ENCODE measurements at regions of chr1 and their contacts with region 1.

Region 1: GRCh38 chr1:66446261-66447001 is 87.5 kb upstream of the SGIP1 start:
- DNase-seq: peak in 6 of 9 experiments; percentile 14 to 86 (median 31)
- ATAC-seq: peak; percentile 74
- H3K4me3 ChIP-seq: peak overlapping the region in 1 of 2 experiments; percentile 12
- H3K4me3 Mint-ChIP-seq: peak overlapping the region; percentile 66
- H3K27ac ChIP-seq: peak overlapping the region; percentile 47 to 73
- H3K27ac Mint-ChIP-seq: peak overlapping the region; percentile 95
- H3K4me1 ChIP-seq: peaks cover 20% of the 10 kb centered on the region
- H3K4me1 Mint-ChIP-seq: peaks cover 23% of the 10 kb centered on the region
- H3K27me3 ChIP-seq: no peaks in the 10 kb centered on the region
- H3K27me3 Mint-ChIP-seq: no peaks in the 10 kb centered on the region
- CTCF ChIP-seq: peak; percentile 90

Region 2: DNA sequence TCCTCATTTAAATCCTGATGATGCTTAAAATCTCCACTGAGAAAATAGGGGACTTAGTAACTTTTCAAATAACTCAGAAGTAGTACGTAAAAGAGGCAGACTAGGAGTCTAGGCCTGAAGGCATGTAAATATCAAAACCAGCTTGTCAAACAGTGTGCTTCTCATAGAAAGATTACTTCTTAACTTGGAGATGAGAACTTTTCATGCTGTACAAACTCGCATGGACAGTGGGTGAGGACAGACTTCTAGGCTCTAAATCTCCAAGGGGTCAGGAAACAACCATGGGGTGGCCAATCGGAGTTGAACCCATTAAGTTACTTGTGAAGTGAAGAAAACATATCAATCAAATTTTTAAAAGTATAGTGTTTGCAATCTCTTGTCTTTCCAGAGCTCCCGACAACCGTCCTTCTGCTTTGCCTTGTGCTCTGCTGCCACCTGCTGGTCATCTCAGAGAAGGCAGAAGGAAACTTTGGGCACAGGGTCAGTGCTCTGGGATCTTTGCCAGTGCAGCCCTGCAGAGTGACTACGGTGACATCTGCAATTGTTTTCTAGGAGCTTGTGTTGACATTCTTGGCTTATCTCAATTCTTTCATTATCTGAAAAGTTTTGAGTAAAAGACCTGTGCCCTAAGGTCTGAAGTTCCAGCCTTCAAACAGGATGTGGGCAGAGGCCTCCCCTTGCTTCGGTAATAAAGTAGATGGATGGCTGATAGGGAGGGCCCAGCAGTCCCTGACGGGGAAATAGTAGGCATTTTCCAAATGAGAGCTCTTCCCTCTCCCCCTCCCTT is 758.8 kb before region 1 on chr1:
- CTCF ChIA-PET with region 1: no interaction called
- POLR2A ChIA-PET with region 1: no interaction called
- intact Hi-C with region 1: loop called in 1 of 2 experiments (anchors 5 kb)
- DNase-seq: peak; percentile 51 to 87 (median 75)
- ATAC-seq: peak; percentile 74
- H3K4me3 ChIP-seq: no peak overlapping the region
- H3K4me3 Mint-ChIP-seq: no peak overlapping the region
- H3K27ac ChIP-seq: no peak overlapping the region
- H3K27ac Mint-ChIP-seq: no peak overlapping the region
- H3K4me1 ChIP-seq: peaks cover 8% of the 10 kb centered on the region
- H3K4me1 Mint-ChIP-seq: peaks cover 4% of the 10 kb centered on the region
- H3K27me3 ChIP-seq: no peaks in the 10 kb centered on the region
- H3K27me3 Mint-ChIP-seq: peaks cover 19% of the 10 kb centered on the region
- CTCF ChIP-seq: peak; percentile 99

Region 3: DNA sequence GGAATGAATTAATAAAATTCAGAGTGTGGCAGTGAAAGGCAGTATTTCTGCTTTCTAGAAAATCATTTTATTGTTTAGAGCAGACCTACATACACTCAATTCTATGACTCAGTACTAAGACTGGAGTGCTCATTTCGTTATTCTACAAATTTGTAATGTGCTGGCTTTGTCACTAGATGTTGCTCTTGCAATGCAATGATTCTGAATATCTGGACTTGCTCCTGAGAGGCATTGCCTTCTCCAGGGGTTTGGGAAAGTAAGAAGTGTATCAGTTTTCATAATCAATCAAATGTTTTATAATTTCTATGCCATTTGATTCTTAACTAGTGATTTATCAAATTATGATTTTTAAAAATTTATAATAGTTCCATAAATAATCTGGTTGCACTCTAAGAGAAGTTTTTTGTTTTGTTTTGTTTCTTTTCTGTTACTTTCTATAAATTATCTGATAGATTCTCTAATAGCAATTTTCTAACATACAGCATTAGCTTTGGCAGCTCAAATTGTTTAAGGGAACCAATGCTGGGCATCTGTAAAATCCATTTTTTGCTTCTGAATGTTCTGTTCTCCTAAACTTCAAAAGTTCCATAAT is 193.0 kb before region 1 on chr1:
- CTCF ChIA-PET with region 1: interaction called, 677 read pairs
- POLR2A ChIA-PET with region 1: interaction called, 18 read pairs
- intact Hi-C with region 1: loop called (anchors 1 kb)
- DNase-seq: peak in 3 of 9 experiments; percentile 19 to 74 (median 61)
- ATAC-seq: peak; percentile 86
- H3K4me3 ChIP-seq: no peak overlapping the region
- H3K4me3 Mint-ChIP-seq: no peak overlapping the region
- H3K27ac ChIP-seq: no peak overlapping the region
- H3K27ac Mint-ChIP-seq: no peak overlapping the region
- H3K4me1 ChIP-seq: peaks cover 5% of the 10 kb centered on the region
- H3K4me1 Mint-ChIP-seq: peaks cover 13% of the 10 kb centered on the region
- H3K27me3 ChIP-seq: no peaks in the 10 kb centered on the region
- H3K27me3 Mint-ChIP-seq: no peaks in the 10 kb centered on the region
- CTCF ChIP-seq: peak; percentile 84

Region 4: DNA sequence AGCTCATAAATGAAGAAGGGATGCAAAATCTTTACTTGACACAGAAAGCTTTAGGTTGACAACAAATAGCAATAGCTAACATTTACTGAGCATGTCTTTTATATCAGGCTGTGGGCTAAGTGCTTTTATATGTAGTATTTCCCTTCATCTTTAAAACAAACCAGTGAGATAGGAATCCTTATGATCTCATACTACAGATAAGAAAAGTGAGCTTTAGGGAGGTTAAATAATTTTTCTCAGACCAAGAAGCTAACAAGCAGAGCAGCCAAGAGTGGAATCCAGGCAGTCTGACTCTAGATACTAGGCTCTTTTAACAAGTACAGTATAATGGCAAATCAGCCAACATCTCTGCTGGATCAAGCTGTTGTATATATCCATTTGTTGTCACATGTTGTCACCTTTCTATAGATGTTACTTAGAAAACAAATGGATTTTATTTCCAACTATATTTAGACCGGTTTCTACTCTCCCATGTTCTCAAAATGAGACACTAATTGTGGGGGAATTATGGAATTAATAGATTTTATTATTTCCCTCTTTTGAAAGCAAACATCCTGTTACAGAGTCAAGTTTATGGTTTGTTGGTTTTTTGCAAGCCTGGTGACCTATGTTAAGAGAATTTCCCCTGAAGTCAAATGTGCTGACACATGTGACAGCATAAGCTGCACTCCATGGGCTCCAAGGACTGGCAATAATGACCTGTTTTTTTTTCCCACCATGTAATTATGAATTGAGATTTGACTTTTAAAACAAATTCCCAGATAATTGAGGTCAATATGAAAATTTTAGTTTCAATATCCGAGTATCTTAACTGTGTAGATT is 155.2 kb before region 1 on chr1:
- CTCF ChIA-PET with region 1: interaction called, 13 read pairs
- POLR2A ChIA-PET with region 1: no interaction called
- intact Hi-C with region 1: no loop called
- DNase-seq: no peak
- ATAC-seq: no peak
- H3K4me3 ChIP-seq: no peak overlapping the region
- H3K4me3 Mint-ChIP-seq: no peak overlapping the region
- H3K27ac ChIP-seq: no peak overlapping the region
- H3K27ac Mint-ChIP-seq: no peak overlapping the region
- H3K4me1 ChIP-seq: peaks cover 3% of the 10 kb centered on the region
- H3K4me1 Mint-ChIP-seq: peaks cover 28% of the 10 kb centered on the region
- H3K27me3 ChIP-seq: no peaks in the 10 kb centered on the region
- H3K27me3 Mint-ChIP-seq: no peaks in the 10 kb centered on the region
- CTCF ChIP-seq: no peak

Region 5: GRCh38 chr1:66350001-66350547 is 96.4 kb before region 1 on chr1:
- CTCF ChIA-PET with region 1: interaction called, 17 read pairs
- POLR2A ChIA-PET with region 1: interaction called, 3 read pairs
- intact Hi-C with region 1: no loop called
- DNase-seq: peak in 7 of 9 experiments; percentile 30 to 90 (median 68)
- ATAC-seq: peak; percentile 80
- H3K4me3 ChIP-seq: peak overlapping the region in 1 of 2 experiments; percentile 16
- H3K4me3 Mint-ChIP-seq: peak overlapping the region; percentile 72
- H3K27ac ChIP-seq: peak overlapping the region; percentile 33 to 68
- H3K27ac Mint-ChIP-seq: peak overlapping the region; percentile 95
- H3K4me1 ChIP-seq: peaks cover 81% of the 10 kb centered on the region
- H3K4me1 Mint-ChIP-seq: peaks cover 96% of the 10 kb centered on the region
- H3K27me3 ChIP-seq: no peaks in the 10 kb centered on the region
- H3K27me3 Mint-ChIP-seq: no peaks in the 10 kb centered on the region
- CTCF ChIP-seq: no peak

Region 6: DNA sequence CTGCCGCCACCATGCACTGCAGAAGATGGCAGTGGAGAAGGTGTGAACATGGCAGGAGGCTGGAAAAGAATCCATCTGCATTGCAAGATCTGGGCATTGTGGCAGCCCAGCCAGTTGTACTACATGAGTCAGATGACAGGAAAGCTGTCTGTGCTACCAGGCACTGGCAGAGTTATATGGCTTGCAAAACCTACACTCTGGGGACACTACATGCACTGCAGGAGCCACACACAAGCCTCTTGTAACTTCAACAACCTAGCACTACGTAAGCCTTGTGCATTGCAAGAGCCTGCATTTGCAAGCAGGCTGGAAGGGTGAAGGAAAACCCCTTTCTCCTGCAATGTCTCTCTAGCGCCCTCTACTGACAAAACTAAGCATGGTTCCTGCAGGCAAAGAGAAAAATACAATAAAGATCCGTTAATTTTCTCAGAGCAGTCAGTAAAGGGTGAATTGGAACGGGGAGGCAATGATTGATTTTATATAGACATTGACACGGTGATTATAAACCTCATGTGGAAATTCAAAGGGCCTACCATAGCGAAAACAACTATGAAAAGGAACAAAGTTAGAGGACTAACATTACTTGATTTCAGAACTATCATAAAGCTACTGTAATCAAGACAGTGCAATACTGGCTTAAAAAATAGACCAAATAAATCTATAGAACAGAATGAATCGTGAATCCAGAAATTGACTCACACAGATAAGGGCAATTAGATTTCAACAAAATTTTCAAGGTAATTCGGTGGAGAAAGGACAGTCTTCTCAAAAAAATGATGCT is 279.6 kb after region 1 on chr1:
- CTCF ChIA-PET with region 1: no interaction called
- POLR2A ChIA-PET with region 1: no interaction called
- intact Hi-C with region 1: loop called (anchors 5 kb)
- DNase-seq: peak; percentile 4 to 78 (median 42)
- ATAC-seq: peak; percentile 66
- H3K4me3 ChIP-seq: no peak overlapping the region
- H3K4me3 Mint-ChIP-seq: no peak overlapping the region
- H3K27ac ChIP-seq: no peak overlapping the region
- H3K27ac Mint-ChIP-seq: no peak overlapping the region
- H3K4me1 ChIP-seq: no peaks in the 10 kb centered on the region
- H3K4me1 Mint-ChIP-seq: peaks cover 17% of the 10 kb centered on the region
- H3K27me3 ChIP-seq: no peaks in the 10 kb centered on the region
- H3K27me3 Mint-ChIP-seq: peaks cover 20% of the 10 kb centered on the region
- CTCF ChIP-seq: peak; percentile 94

Region 7: GRCh38 chr1:66890621-66891020 is 444.2 kb after region 1 on chr1:
- CTCF ChIA-PET with region 1: no interaction called
- POLR2A ChIA-PET with region 1: no interaction called
- intact Hi-C with region 1: no loop called
- DNase-seq: no peak
- ATAC-seq: no peak
- H3K4me3 ChIP-seq: no peak overlapping the region
- H3K4me3 Mint-ChIP-seq: no peak overlapping the region
- H3K27ac ChIP-seq: no peak overlapping the region
- H3K27ac Mint-ChIP-seq: no peak overlapping the region
- H3K4me1 ChIP-seq: no peaks in the 10 kb centered on the region
- H3K4me1 Mint-ChIP-seq: no peaks in the 10 kb centered on the region
- H3K27me3 ChIP-seq: no peaks in the 10 kb centered on the region
- H3K27me3 Mint-ChIP-seq: no peaks in the 10 kb centered on the region
- CTCF ChIP-seq: no peak

Measured in CD8-positive, alpha-beta T cell (primary cell).